Heart right ventricle (tissue), 16 donors: ENCODE measurements at regions of chr3 and their contacts with region 1.

Region 1: DNA sequence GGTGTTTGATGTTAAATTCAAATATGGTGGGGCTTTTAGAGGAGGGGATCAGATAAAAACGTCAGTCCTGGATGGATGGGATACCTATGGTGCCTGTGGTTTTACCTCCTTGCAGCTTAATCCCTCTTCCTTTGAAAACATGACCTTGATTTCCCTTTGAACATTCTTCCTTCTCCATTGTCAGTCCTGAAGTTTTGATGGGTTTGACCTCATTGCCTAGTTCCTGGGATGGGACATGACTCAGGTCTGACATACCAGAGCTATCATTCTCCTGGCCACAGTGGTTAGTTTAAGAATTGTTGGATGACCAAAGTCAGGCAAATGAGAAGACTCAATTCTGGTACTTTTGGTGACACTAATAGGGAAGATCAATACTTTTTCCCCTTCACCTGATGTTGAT is 87.2 kb downstream of the PRICKLE2 start:
- DNase-seq: no peak
- ATAC-seq: no peak
- H3K4me3 ChIP-seq: no peak overlapping the region
- H3K27ac ChIP-seq: no peak overlapping the region
- H3K4me1 ChIP-seq: peaks cover 0 to 36% (median 0%) of the 10 kb centered on the region in 9 donors
- H3K27me3 ChIP-seq: no peaks in the 10 kb centered on the region
- CTCF ChIP-seq: no peak

Region 2: DNA sequence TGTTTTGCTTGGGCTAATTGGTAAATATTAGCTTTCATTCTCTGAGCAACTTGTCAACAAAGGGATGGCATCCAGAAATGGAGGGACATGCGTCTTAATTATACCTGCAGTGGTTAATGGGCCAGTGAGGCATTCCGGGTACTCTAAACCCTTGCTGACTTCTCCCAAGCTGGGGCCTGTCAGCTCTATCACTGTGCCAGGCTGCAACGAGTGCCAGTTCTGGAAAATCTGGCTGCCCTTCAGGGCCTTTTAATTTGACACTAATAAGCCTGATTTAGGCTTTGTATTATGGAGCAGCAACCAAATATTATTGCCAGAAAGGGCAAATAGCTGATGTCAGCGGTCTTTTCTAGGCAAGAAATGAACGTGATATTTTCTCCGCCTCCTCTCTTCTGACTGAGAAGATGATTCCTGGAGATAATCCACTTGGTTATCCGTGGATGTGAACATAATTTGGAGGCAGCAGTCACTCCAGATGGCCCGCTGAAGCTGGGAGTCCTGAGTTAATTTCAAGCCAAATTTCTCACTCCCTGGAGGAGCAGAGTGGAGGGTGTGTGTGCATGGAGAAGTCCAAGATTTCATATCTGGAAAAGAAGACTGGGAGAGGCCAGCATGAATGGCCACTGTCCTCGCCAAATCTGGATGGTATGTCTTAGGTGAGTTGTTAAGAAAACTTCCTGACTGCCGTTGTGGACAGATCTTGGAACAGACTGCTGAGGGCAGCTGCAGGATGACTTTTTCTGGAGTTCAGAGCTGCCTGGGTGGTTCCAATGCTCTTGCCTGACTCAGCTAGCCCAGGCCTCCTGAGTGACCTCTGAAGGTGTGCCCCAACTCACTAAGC is 70.3 kb before region 1 on chr3:
- intact Hi-C with region 1: loop called in 1 of 10 experiments (anchors 5 kb)
- DNase-seq: no peak
- ATAC-seq: peak in 6 of 8 donors; percentile 46 to 73 (median 66)
- H3K4me3 ChIP-seq: no peak overlapping the region
- H3K27ac ChIP-seq: peak overlapping the region in 2 of 10 donors; percentile 9 to 11
- H3K4me1 ChIP-seq: peaks cover 0 to 19% (median 9%) of the 10 kb centered on the region in 9 donors
- H3K27me3 ChIP-seq: no peaks in the 10 kb centered on the region
- CTCF ChIP-seq: no peak